PC-9 (cell line): ENCODE measurements at regions of chrX and their contacts with region 1.

Region 1: GRCh38 chrX:123814343-123814905 is 45.4 kb upstream of the XIAP start:
- DNase-seq: no peak
- H3K4me3 ChIP-seq: peak overlapping the region; percentile 22; the same call in 1 of the 2 replicates
- H3K27ac ChIP-seq: peak overlapping the region; percentile 61
- H3K4me1 ChIP-seq: peaks cover 50% of the 10 kb centered on the region
- H3K27me3 ChIP-seq: no peaks in the 10 kb centered on the region
- CTCF ChIP-seq: no peak

Region 2: GRCh38 chrX:123803331-123803983 is 11.0 kb before region 1 on chrX:
- CTCF ChIA-PET with region 1: no interaction called
- POLR2A ChIA-PET with region 1: no interaction called
- intact Hi-C with region 1: loop called (anchors 1 kb)
- DNase-seq: peak; percentile 71 to 99
- H3K4me3 ChIP-seq: no peak overlapping the region
- H3K27ac ChIP-seq: peak overlapping the region; percentile 65
- H3K4me1 ChIP-seq: peaks cover 59% of the 10 kb centered on the region
- H3K27me3 ChIP-seq: no peaks in the 10 kb centered on the region
- CTCF ChIP-seq: no peak

Region 3: GRCh38 chrX:124573468-124573867 is 759.0 kb after region 1 on chrX:
- CTCF ChIA-PET with region 1: no interaction called
- POLR2A ChIA-PET with region 1: no interaction called
- intact Hi-C with region 1: no loop called
- DNase-seq: no peak
- H3K4me3 ChIP-seq: no peak overlapping the region
- H3K27ac ChIP-seq: no peak overlapping the region
- H3K4me1 ChIP-seq: no peaks in the 10 kb centered on the region
- H3K27me3 ChIP-seq: no peaks in the 10 kb centered on the region
- CTCF ChIP-seq: no peak